ENCODE measurements at regions of chr6 and their contacts with region 1.

Region 1: GRCh38 chr6:84220809-84221409 is 6.5 kb downstream of the CEP162 start:
- DNase-seq: no peak
- H3K4me3 ChIP-seq: no peak overlapping the region
- H3K27ac ChIP-seq: no peak overlapping the region
- H3K4me1 ChIP-seq: peaks cover 0 to 8% (median 2%) of the 10 kb centered on the region in 4 donors
- H3K27me3 ChIP-seq: no peaks in the 10 kb centered on the region
- CTCF ChIP-seq: peak; percentile 21 to 52 (median 46)
- EP300 ChIP-seq: no peak
- POLR2A ChIP-seq: no peak

Region 2: GRCh38 chr6:83884523-83884922 is 336.4 kb before region 1 on chr6:
- intact Hi-C with region 1: loop called (anchors 5 kb)
- DNase-seq: no peak
- H3K4me3 ChIP-seq: no peak overlapping the region
- H3K27ac ChIP-seq: no peak overlapping the region
- H3K4me1 ChIP-seq: peaks cover 0 to 3% (median 0%) of the 10 kb centered on the region in 4 donors
- H3K27me3 ChIP-seq: no peaks in the 10 kb centered on the region
- CTCF ChIP-seq: peak; percentile 48 to 61 (median 50)
- EP300 ChIP-seq: no peak
- POLR2A ChIP-seq: no peak

Region 3: DNA sequence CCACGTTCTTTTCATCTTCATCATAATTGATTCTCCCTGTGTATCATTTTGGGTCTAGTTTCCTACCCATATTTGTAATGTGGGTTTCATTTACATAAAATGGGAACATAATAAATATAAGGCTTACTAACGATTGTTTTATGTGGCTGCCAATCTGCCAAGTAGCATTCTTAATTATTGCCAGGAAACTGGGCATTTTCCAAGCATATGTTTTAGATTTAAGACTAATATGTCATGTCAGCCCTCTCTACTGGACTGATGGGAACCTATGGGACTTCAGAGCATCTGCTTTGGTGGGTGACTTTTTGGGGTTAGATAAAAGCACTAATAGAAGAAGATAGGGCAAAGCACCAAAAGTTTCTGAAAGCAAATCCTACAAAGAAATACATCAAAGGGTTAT is 386.0 kb after region 1 on chr6:
- intact Hi-C with region 1: no loop called
- DNase-seq: no peak
- H3K4me3 ChIP-seq: no peak overlapping the region
- H3K27ac ChIP-seq: no peak overlapping the region
- H3K4me1 ChIP-seq: no peaks in the 10 kb centered on the region
- H3K27me3 ChIP-seq: no peaks in the 10 kb centered on the region
- CTCF ChIP-seq: no peak
- EP300 ChIP-seq: no peak
- POLR2A ChIP-seq: no peak

Region 4: GRCh38 chr6:85690071-85690470 is 1469.2 kb after region 1 on chr6:
- intact Hi-C with region 1: loop called (anchors 10 kb)
- DNase-seq: no peak
- H3K4me3 ChIP-seq: no peak overlapping the region
- H3K27ac ChIP-seq: no peak overlapping the region
- H3K4me1 ChIP-seq: no peaks in the 10 kb centered on the region
- H3K27me3 ChIP-seq: no peaks in the 10 kb centered on the region
- CTCF ChIP-seq: no peak
- EP300 ChIP-seq: no peak
- POLR2A ChIP-seq: no peak